Activated B cell treated with CpG ODN at 0.5 μM for 24 hours (primary cell): ENCODE measurements at regions of chr11 and their contacts with region 1.

Region 1: GRCh38 chr11:86021377-86021776 is 47.5 kb downstream of the PICALM start:
- DNase-seq: no peak
- ATAC-seq: peak; percentile 47
- H3K4me3 Mint-ChIP-seq: no peak overlapping the region
- H3K27ac Mint-ChIP-seq: peak overlapping the region; percentile 37
- H3K4me1 Mint-ChIP-seq: peaks cover 17% of the 10 kb centered on the region
- H3K27me3 Mint-ChIP-seq: no peaks in the 10 kb centered on the region
- CTCF ChIP-seq: no peak

Region 2: GRCh38 chr11:85977751-85978160 is 43.6 kb before region 1 on chr11:
- CTCF ChIA-PET with region 1: no interaction called
- POLR2A ChIA-PET with region 1: no interaction called
- intact Hi-C with region 1: no loop called
- DNase-seq: no peak
- ATAC-seq: no peak
- H3K4me3 Mint-ChIP-seq: no peak overlapping the region
- H3K27ac Mint-ChIP-seq: no peak overlapping the region
- H3K4me1 Mint-ChIP-seq: no peaks in the 10 kb centered on the region
- H3K27me3 Mint-ChIP-seq: no peaks in the 10 kb centered on the region
- CTCF ChIP-seq: no peak

Region 3: GRCh38 chr11:85988780-85989179 is 32.6 kb before region 1 on chr11:
- CTCF ChIA-PET with region 1: no interaction called
- POLR2A ChIA-PET with region 1: no interaction called
- intact Hi-C with region 1: loop called (anchors 5 kb)
- DNase-seq: no peak
- ATAC-seq: no peak
- H3K4me3 Mint-ChIP-seq: no peak overlapping the region
- H3K27ac Mint-ChIP-seq: no peak overlapping the region
- H3K4me1 Mint-ChIP-seq: peaks cover 4% of the 10 kb centered on the region
- H3K27me3 Mint-ChIP-seq: no peaks in the 10 kb centered on the region
- CTCF ChIP-seq: no peak

Region 4: DNA sequence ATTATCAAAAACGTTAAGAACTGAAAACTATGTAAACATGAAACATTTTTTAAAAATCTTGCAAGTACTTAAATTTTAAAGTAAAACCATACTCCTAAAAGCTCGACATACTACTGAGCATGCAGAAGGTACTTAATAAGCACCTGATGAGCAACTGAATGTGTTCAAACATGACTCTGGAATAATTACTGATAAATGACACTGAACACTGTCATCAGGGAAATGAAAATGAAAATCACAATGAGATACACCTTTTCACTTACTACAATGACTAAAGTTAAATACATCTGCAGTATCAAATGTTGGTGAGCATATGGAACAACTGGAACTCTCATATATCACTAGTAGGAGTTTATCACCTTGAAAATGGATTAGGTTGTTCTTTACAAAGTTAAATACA is 17.7 kb before region 1 on chr11:
- CTCF ChIA-PET with region 1: no interaction called
- POLR2A ChIA-PET with region 1: no interaction called
- intact Hi-C with region 1: loop called (anchors 2 kb)
- DNase-seq: no peak
- ATAC-seq: no peak
- H3K4me3 Mint-ChIP-seq: no peak overlapping the region
- H3K27ac Mint-ChIP-seq: no peak overlapping the region
- H3K4me1 Mint-ChIP-seq: no peaks in the 10 kb centered on the region
- H3K27me3 Mint-ChIP-seq: no peaks in the 10 kb centered on the region
- CTCF ChIP-seq: no peak